A549 (cell line): ENCODE measurements at regions of chr1 and their contacts with region 1.

Region 1: GRCh38 chr1:221839796-221840395 is 98.0 kb upstream of the DUSP10 start:
- DNase-seq: peak; percentile 75 to 92
- ATAC-seq: peak; percentile 95 to 96
- H3K4me3 ChIP-seq: no peak overlapping the region
- H3K27ac ChIP-seq: peak overlapping the region; percentile 92 to 95
- H3K4me1 ChIP-seq: peaks cover 27% of the 10 kb centered on the region
- CTCF ChIP-seq: no peak
- EP300 ChIP-seq: peak; percentile 67 to 82; a peak in 3 of 5 replicates
- POLR2A ChIP-seq: no peak
- RAD21 ChIP-seq: peak in 1 of 2 experiments; percentile 61; a peak in 4 of 5 replicates

Region 2: DNA sequence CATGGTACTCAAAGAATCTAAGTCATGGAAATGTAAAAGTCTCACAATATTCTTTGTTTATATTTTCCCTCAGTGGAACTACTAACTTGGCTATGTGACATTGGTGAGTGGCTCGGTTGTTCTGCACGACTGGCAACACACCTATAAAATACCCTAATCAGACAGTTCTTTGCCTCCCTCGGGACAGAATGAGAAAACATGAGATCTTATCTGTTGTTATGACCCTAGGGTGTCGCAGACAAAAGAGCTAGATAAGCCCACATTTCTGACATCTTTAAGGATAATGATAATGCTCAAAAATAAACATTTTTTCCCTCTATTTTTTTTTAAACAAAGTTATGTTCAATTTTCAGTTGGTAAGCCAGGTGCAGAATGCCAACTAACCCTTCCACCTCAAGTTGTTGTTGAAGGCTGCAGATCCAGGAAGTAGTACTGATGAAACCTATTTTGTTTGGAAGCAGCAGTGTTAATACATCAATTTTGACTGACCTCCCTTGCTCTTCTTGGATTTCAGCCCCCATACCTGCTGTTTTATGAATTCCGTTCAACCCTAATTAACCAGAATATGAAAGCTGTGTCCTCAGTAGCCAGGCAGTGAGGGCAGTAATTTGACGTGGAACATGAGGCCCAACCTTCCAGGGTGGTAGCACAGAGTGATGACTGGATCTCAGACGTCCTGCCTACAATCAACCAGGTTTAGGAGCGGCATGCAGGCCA is 10.7 kb after region 1 on chr1:
- CTCF ChIA-PET with region 1: interaction called, 11 read pairs
- POLR2A ChIA-PET with region 1: no interaction called
- DNase-seq: no peak
- ATAC-seq: no peak
- H3K4me3 ChIP-seq: no peak overlapping the region
- H3K27ac ChIP-seq: no peak overlapping the region; a peak in 1 of 6 replicates
- H3K4me1 ChIP-seq: peaks cover 10% of the 10 kb centered on the region
- CTCF ChIP-seq: no peak
- EP300 ChIP-seq: no peak
- POLR2A ChIP-seq: no peak
- RAD21 ChIP-seq: no peak